Naive thymus-derived CD4-positive, alpha-beta T cell (primary cell): ENCODE measurements at regions of chr1 and their contacts with region 1.

Region 1: GRCh38 chr1:219173758-219174588 is at the start of gene LYPLAL1:
- DNase-seq: peak; percentile 82 to 92 (median 88)
- ATAC-seq: peak; percentile 98
- H3K4me3 ChIP-seq: peak within 1 kb of the TSS; percentile 84
- H3K4me3 Mint-ChIP-seq: peak within 1 kb of the TSS; percentile 84 to 100 (median 98)
- H3K27ac ChIP-seq: peak within 1 kb of the TSS; percentile 76
- H3K27ac Mint-ChIP-seq: peak within 1 kb of the TSS; percentile 96 to 99 (median 97)
- H3K4me1 ChIP-seq: peaks cover 15 to 18% of the 10 kb centered on the region in 2 donors
- H3K4me1 Mint-ChIP-seq: peaks cover 34 to 55% (median 50%) of the 10 kb centered on the region in 7 donors
- H3K27me3 ChIP-seq: no peaks in the 10 kb centered on the region
- H3K27me3 Mint-ChIP-seq: peaks cover 0 to 5% (median 0%) of the 10 kb centered on the region in 5 donors
- total RNA-seq, gene LYPLAL1: 12.2 to 24.1 (median 20.4) TPM

Region 2: DNA sequence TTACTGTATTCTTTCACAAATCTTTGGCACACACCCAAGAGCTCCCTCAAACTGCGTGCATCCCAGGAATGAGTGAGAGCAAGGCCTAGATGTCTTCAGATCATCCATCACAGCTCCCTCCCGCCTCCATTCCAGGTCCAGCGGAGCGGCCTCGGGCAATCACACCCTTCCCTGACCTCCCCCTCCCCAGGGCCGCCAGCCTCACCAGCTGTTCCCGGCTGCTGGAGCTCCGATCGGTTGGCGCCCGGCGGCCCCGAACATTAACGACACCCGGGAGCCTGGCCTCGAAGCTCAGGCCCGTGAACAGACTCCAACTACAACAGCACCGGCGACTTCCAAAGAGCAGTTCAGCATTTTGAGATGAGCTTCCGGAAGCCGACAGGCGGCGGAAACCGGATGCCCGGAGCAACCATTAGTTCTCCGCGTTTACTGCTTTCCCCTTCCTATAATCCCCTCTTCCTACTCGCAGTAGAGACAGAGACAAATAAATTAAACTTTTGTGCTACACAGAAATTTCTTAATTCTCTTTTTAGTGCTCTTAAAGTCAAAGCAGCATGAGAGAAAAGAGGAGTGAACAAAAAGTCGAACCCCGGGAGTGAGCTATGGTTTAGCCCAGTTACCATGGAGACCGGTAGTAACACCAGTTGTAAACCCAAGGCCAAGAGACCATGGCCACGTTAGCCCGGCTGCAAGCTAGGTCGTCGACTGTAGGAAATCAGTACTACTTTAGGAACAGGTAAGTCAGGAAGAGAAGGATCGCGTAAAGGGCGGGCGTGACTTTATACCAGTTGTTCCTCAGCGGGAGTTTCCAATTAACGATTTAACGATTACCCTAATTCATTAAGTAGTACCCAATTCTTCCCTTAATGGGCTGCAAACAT is 1543.0 kb before region 1 on chr1 and contains the starts of genes GPATCH2 and SPATA17:
- CTCF ChIA-PET with region 1: no interaction called
- POLR2A ChIA-PET with region 1: no interaction called
- intact Hi-C with region 1: loop called in 1 of 2 experiments (anchors 1 kb)
- DNase-seq: peak; percentile 52 to 92 (median 87)
- ATAC-seq: peak; percentile 94
- H3K4me3 ChIP-seq: peak within 1 kb of the TSS; percentile 68
- H3K4me3 Mint-ChIP-seq: peak within 1 kb of the TSS; percentile 89 to 99 (median 96)
- H3K27ac ChIP-seq: peak within 1 kb of the TSS; percentile 96
- H3K27ac Mint-ChIP-seq: peak within 1 kb of the TSS; percentile 97 to 100 (median 99)
- H3K4me1 ChIP-seq: peaks cover 6 to 12% of the 10 kb centered on the region in 2 donors
- H3K4me1 Mint-ChIP-seq: peaks cover 17 to 53% (median 43%) of the 10 kb centered on the region in 7 donors
- H3K27me3 ChIP-seq: no peaks in the 10 kb centered on the region
- H3K27me3 Mint-ChIP-seq: peaks cover 0 to 7% (median 3%) of the 10 kb centered on the region in 5 donors
- total RNA-seq, gene GPATCH2: 8.6 to 13.3 (median 11.3) TPM
- total RNA-seq, gene SPATA17: not detected

Region 3: GRCh38 chr1:218284934-218285635 is 888.9 kb before region 1 on chr1 and contains the start of gene RRP15:
- CTCF ChIA-PET with region 1: no interaction called
- POLR2A ChIA-PET with region 1: interaction called, 3 read pairs
- intact Hi-C with region 1: loop called (anchors 1 to 5 kb)
- DNase-seq: peak; percentile 75 to 85 (median 82)
- ATAC-seq: peak; percentile 97
- H3K4me3 ChIP-seq: peak within 1 kb of the TSS; percentile 78
- H3K4me3 Mint-ChIP-seq: peak within 1 kb of the TSS; percentile 87 to 100 (median 98)
- H3K27ac ChIP-seq: peak within 1 kb of the TSS; percentile 77
- H3K27ac Mint-ChIP-seq: peak within 1 kb of the TSS; percentile 89 to 99 (median 95)
- H3K4me1 ChIP-seq: peaks cover 11 to 16% of the 10 kb centered on the region in 2 donors
- H3K4me1 Mint-ChIP-seq: peaks cover 19 to 55% (median 42%) of the 10 kb centered on the region in 7 donors
- H3K27me3 ChIP-seq: no peaks in the 10 kb centered on the region
- H3K27me3 Mint-ChIP-seq: peaks cover 3 to 20% (median 12%) of the 10 kb centered on the region in 5 donors
- total RNA-seq, gene RRP15: 12.8 to 19.0 (median 17.7) TPM

Region 4: DNA sequence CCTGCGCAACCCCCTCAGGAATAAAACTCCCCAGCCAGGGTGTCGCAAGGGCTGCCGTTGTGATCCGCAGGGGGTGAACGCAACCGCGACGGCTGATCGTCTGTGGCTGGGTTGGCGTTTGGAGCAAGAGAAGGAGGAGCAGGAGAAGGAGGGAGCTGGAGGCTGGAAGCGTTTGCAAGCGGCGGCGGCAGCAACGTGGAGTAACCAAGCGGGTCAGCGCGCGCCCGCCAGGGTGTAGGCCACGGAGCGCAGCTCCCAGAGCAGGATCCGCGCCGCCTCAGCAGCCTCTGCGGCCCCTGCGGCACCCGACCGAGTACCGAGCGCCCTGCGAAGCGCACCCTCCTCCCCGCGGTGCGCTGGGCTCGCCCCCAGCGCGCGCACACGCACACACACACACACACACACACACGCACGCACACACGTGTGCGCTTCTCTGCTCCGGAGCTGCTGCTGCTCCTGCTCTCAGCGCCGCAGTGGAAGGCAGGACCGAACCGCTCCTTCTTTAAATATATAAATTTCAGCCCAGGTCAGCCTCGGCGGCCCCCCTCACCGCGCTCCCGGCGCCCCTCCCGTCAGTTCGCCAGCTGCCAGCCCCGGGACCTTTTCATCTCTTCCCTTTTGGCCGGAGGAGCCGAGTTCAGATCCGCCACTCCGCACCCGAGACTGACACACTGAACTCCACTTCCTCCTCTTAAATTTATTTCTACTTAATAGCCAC is 828.1 kb before region 1 on chr1:
- CTCF ChIA-PET with region 1: no interaction called
- POLR2A ChIA-PET with region 1: no interaction called
- intact Hi-C with region 1: loop called in 1 of 2 experiments (anchors 10 kb)
- DNase-seq: peak in 7 of 9 donors; percentile 16 to 39 (median 27)
- ATAC-seq: peak; percentile 75
- H3K4me3 ChIP-seq: peak overlapping the region; percentile 63
- H3K4me3 Mint-ChIP-seq: peak overlapping the region in 2 of 10 donors; percentile 86 to 87
- H3K27ac ChIP-seq: no peak overlapping the region
- H3K27ac Mint-ChIP-seq: peak overlapping the region in 5 of 9 donors; percentile 9 to 74 (median 54)
- H3K4me1 ChIP-seq: peaks cover 4 to 26% of the 10 kb centered on the region in 2 donors
- H3K4me1 Mint-ChIP-seq: peaks cover 14 to 30% (median 25%) of the 10 kb centered on the region in 7 donors
- H3K27me3 ChIP-seq: peaks cover 0 to 3% of the 10 kb centered on the region in 2 donors
- H3K27me3 Mint-ChIP-seq: peaks cover 20 to 48% (median 23%) of the 10 kb centered on the region in 5 donors

Region 5: GRCh38 chr1:219184337-219184736 is 10.4 kb after region 1 on chr1:
- CTCF ChIA-PET with region 1: no interaction called
- POLR2A ChIA-PET with region 1: interaction called, 5 read pairs
- intact Hi-C with region 1: loop called in 1 of 2 experiments (anchors 1 kb)
- DNase-seq: no peak
- ATAC-seq: no peak
- H3K4me3 ChIP-seq: no peak overlapping the region
- H3K4me3 Mint-ChIP-seq: peak overlapping the region in 6 of 10 donors; percentile 26 to 74 (median 56)
- H3K27ac ChIP-seq: no peak overlapping the region
- H3K27ac Mint-ChIP-seq: peak overlapping the region in 2 of 9 donors; percentile 39 to 43
- H3K4me1 ChIP-seq: peaks cover 0 to 3% of the 10 kb centered on the region in 2 donors
- H3K4me1 Mint-ChIP-seq: peaks cover 26 to 70% (median 64%) of the 10 kb centered on the region in 7 donors
- H3K27me3 ChIP-seq: no peaks in the 10 kb centered on the region
- H3K27me3 Mint-ChIP-seq: no peaks in the 10 kb centered on the region

Region 6: GRCh38 chr1:220046052-220046930 is 872.3 kb after region 1 on chr1 and contains the start of gene EPRS1:
- CTCF ChIA-PET with region 1: no interaction called
- POLR2A ChIA-PET with region 1: no interaction called
- intact Hi-C with region 1: loop called (anchors 1 to 5 kb)
- DNase-seq: peak; percentile 83 to 97 (median 95)
- ATAC-seq: peak; percentile 99
- H3K4me3 ChIP-seq: peak within 1 kb of the TSS; percentile 92
- H3K4me3 Mint-ChIP-seq: peak within 1 kb of the TSS; percentile 88 to 99 (median 93)
- H3K27ac ChIP-seq: peak within 1 kb of the TSS; percentile 86
- H3K27ac Mint-ChIP-seq: peak within 1 kb of the TSS; percentile 80 to 99 (median 94)
- H3K4me1 ChIP-seq: peaks cover 0 to 23% of the 10 kb centered on the region in 2 donors
- H3K4me1 Mint-ChIP-seq: peaks cover 8 to 48% (median 34%) of the 10 kb centered on the region in 7 donors
- H3K27me3 ChIP-seq: no peaks in the 10 kb centered on the region
- H3K27me3 Mint-ChIP-seq: peaks cover 0 to 3% (median 0%) of the 10 kb centered on the region in 5 donors
- total RNA-seq, gene EPRS1: 39.2 to 130 (median 93.6) TPM